GM10248 (cell line): ENCODE measurements at regions of chr7 and their contacts with region 1.

Region 1: GRCh38 chr7:120792091-120792860 is 65.7 kb downstream of the TSPAN12 start:
- DNase-seq: peak; percentile 59
- CTCF ChIP-seq: peak; percentile 97

Region 2: DNA sequence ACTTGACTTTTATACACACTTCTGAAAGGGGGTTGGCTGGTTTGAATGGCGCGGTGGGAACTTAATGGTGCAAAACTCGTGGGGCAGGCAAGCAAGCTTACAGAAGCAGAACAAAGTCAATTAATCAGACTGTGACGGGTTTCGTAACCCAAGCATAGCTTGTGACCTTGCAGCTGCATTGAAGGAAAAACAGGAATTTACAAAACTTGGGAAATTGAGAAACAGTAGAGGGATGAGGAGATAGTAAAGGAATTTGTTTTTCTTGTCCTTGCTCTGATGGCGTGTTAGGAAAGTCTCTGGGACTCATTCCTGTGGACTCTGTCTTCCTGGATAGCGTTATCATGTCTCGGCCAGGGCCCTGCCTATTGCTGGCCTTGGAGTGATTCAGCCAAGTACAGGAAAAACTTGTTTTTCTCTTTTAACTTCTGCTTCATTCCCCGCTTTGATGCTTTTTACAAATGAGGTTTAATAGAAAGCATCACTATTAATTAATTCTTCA is 739.3 kb before region 1 on chr7:
- CTCF ChIA-PET with region 1: no interaction called
- POLR2A ChIA-PET with region 1: no interaction called
- DNase-seq: no peak
- CTCF ChIP-seq: no peak

Region 3: GRCh38 chr7:120617275-120617674 is 175.0 kb before region 1 on chr7:
- CTCF ChIA-PET with region 1: no interaction called
- POLR2A ChIA-PET with region 1: no interaction called
- DNase-seq: no peak
- CTCF ChIP-seq: no peak

Region 4: DNA sequence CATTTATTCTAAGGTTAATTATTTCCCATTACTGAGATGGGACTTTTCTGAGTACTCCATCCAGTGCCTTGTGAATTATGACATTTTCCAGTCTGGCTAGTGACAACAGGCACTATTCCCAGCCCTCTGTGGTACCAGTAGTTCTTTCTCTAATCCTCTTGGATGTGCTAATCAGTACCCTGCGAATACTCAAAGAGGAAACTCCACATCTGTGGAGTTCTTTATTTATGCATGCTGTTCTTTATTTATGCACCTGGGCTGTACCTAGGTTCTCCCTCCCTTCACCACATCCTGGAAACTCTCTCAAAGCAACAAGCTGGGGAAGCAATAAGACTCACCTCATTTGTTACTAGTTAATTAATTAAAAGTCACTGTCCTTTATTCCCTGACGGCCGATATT is 17.8 kb before region 1 on chr7:
- CTCF ChIA-PET with region 1: interaction called, 25 read pairs
- POLR2A ChIA-PET with region 1: no interaction called
- DNase-seq: no peak
- CTCF ChIP-seq: no peak

Region 5: DNA sequence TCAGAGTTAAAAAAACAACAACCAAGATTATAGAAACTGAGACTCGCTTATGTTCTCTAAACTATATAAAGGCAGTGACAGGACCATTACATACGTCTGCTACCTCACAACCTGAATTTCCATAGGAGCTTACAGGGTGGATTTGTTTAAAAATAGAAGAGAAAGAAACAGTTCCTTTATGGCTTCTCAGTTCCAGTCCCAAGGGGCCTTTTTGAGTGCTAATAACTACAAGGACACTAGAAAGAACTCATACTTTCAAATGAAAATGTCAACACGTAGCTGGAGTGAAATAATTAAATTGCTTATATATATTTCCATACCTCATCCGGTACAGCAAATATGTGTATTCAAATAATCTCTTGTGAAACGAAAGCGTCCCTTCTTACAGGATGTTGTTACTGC is 46.0 kb after region 1 on chr7:
- CTCF ChIA-PET with region 1: interaction called, 11 read pairs
- POLR2A ChIA-PET with region 1: no interaction called
- DNase-seq: no peak
- CTCF ChIP-seq: no peak

Region 6: DNA sequence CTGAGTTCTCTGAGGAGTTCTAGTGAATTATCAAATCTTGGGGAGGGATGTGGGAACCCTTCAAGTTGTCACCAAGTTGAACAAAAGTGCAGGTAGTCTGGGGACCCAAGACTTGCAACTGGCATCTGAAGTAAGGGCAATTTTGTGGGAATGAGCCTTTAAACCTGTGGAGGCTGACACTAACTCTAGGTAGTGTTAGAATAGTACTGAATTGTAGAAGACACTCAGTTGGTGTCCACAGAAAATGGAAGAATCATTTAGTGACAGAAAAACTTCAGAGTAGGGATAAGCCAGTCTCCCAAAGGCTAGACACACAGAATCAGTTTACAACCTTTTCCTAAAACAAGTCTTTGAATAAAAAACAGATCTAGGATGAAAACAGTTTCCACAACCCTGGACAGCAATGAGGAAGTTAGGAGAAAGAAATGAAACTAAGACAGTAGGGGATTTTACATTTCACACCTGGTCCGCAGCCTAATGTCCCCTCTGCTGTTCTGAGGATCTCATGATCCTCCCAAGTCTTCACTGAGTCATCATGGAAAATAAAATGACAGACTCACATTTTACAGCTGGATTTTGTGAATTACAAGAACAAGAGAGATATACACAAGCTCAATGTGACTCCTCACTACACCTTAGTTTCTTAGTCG is 135.3 kb after region 1 on chr7:
- CTCF ChIA-PET with region 1: interaction called, 14 read pairs
- POLR2A ChIA-PET with region 1: no interaction called
- DNase-seq: peak; percentile 10
- CTCF ChIP-seq: no peak

Region 7: DNA sequence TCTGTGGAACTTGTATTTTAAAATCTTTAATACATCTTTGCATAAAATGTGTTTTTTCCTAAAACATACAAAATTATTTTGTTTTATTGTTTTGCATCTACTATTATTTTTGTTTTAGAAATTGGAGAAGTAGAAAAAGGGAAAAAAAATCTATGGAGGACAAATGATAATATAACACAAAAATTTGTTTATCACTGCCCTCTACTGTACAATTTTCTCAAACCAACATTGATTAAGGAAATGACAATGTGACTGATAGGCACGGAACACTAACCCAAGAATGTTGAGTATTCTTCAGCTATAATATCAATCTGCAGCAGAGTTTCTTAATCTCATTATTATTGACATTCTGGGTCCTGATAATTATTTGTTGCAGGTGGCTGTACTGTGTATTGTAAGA is 148.8 kb after region 1 on chr7:
- CTCF ChIA-PET with region 1: interaction called, 10 read pairs
- POLR2A ChIA-PET with region 1: no interaction called
- DNase-seq: no peak
- CTCF ChIP-seq: peak; percentile 31

Region 8: GRCh38 chr7:121081327-121081936 is 289.2 kb after region 1 on chr7:
- CTCF ChIA-PET with region 1: interaction called, 36 read pairs
- POLR2A ChIA-PET with region 1: no interaction called
- DNase-seq: peak; percentile 22
- CTCF ChIP-seq: peak; percentile 46